Left cardiac atrium (tissue), 4 donors: ENCODE measurements at regions of chr18 and their contacts with region 1.

Region 1: GRCh38 chr18:27996801-27997228 is 180.1 kb downstream of the CDH2 start:
- DNase-seq: no peak
- ATAC-seq: no peak

Region 2: DNA sequence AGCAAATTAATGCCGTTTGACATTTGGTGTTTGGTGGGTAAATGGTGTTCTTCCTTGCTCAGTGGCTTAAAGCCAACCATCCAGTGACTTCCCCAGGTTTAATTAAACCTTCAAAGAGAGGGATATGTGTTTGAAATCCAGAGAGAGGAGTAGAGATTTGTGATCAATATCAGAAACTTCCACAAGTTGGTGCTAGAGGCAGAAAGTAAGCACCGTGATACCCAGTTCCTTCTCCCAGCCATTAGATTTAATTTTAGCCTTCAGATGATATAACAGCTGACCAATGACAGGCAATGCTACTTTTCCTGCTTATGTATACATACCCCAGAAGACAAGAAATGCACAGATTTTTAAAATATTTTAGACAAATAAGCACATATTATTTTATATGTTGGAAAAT is 218.4 kb before region 1 on chr18:
- intact Hi-C with region 1: no loop called
- DNase-seq: no peak
- ATAC-seq: peak in 1 of 2 donors; percentile 41

Region 3: DNA sequence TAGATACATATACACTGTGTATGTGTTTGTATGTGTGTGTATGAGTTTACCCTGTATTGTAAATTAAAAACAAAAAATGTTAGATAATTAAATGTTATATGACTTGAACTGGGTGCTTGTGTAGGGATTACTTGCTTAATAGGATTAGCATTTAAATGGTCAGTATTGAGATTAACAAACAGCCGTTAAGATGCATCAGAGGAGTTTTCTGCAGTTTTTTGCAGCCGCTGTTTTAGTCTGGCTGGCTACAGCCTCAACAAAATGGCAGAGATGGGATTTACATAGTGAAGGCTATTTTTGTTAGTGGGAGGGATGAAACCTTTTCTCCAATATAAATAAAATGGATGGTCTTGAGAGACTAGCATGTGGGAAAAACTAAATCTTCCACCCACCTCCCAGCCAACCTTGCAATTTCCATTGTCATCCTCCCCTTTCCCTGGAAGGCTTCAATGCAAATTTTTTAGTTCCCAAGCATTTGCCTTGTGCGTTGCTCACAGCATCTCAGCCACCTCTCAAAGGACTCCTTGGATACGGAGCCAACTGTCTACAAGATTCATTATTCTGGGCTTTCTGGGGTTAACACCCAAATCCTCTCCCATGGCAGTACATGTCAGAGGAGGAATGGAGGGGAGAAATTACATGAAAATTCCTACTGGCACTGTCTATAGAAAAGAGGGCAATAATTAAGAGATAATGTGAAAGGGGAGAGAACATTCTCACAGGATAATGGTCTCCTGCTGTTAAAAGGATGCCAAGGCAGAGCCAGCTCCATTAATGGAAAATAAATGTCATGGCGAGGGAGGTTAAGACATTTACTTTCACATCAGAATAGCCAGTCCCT is 171.8 kb before region 1 on chr18:
- intact Hi-C with region 1: no loop called
- DNase-seq: no peak
- ATAC-seq: no peak

Region 4: DNA sequence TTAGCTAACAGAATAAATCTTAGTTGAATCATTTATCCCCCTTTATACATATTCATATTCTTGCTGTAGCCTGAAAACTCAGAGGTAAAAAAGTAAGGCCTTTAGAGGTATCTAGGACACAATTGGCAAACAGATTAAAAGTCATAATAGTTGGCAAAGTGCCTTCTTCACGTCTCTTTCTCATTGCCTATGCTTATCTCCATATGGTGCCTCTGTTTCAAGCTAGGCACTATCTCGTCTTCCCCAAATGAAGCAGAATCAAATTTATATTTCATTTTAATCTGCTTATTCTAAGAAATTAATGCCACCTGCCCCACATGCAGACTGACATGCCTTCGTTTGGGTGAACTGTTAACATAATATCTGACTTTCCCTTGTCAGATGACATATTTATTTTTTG is 65.3 kb before region 1 on chr18:
- intact Hi-C with region 1: no loop called
- DNase-seq: no peak
- ATAC-seq: no peak

Region 5: GRCh38 chr18:28108814-28109213 is 112.0 kb after region 1 on chr18:
- intact Hi-C with region 1: loop called in 1 of 2 experiments (anchors 5 kb)
- DNase-seq: no peak
- ATAC-seq: no peak